GM10248 (cell line): ENCODE measurements at regions of chr3 and their contacts with region 1.

Region 1: DNA sequence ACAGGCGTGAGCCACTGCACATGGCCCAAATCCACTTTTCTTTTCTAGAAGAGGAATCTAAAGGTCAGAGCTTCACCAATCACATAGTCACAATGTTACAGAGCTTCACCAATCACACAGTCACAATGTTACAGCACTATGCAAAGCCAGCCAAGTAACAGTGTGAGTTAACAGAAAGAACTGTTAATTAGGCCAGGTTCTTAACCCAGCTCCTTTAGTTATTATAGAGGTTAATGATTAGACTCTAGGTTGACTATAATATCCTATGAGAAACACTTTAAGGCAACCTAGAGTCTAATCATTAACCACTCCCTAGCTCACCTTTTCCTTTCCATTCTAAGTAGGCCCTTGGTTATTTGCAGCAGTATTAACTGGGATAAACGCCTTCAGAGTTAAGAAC is 54.0 kb downstream of the TASOR start:
- DNase-seq: no peak
- CTCF ChIP-seq: no peak

Region 2: GRCh38 chr3:56613016-56613415 is 16.0 kb before region 1 on chr3:
- CTCF ChIA-PET with region 1: interaction called, 13 read pairs
- POLR2A ChIA-PET with region 1: no interaction called
- DNase-seq: no peak
- CTCF ChIP-seq: no peak

Region 3: GRCh38 chr3:56645407-56645806 is 16.4 kb after region 1 on chr3:
- CTCF ChIA-PET with region 1: interaction called, 11 read pairs
- POLR2A ChIA-PET with region 1: no interaction called
- DNase-seq: no peak
- CTCF ChIP-seq: no peak